Activated CD4-positive, alpha-beta T cell treated with anti-CD3 and anti-CD28 coated beads, Interleukin-2, amount 10 ng/mL, durations not matched to agents 24 days and 14 days (primary cell): ENCODE measurements at regions of chr3 and their contacts with region 1.

Region 1: GRCh38 chr3:52455283-52456168 is at the start of gene NISCH:
- DNase-seq: peak; percentile 100
- H3K4me3 Mint-ChIP-seq: peak within 1 kb of the TSS; percentile 99
- H3K27ac Mint-ChIP-seq: peak within 1 kb of the TSS; percentile 89
- H3K4me1 Mint-ChIP-seq: peaks cover 28% of the 10 kb centered on the region
- H3K27me3 Mint-ChIP-seq: no peaks in the 10 kb centered on the region
- total RNA-seq, gene NISCH: 72.6 and 75.5 TPM in 2 replicates

Region 2: DNA sequence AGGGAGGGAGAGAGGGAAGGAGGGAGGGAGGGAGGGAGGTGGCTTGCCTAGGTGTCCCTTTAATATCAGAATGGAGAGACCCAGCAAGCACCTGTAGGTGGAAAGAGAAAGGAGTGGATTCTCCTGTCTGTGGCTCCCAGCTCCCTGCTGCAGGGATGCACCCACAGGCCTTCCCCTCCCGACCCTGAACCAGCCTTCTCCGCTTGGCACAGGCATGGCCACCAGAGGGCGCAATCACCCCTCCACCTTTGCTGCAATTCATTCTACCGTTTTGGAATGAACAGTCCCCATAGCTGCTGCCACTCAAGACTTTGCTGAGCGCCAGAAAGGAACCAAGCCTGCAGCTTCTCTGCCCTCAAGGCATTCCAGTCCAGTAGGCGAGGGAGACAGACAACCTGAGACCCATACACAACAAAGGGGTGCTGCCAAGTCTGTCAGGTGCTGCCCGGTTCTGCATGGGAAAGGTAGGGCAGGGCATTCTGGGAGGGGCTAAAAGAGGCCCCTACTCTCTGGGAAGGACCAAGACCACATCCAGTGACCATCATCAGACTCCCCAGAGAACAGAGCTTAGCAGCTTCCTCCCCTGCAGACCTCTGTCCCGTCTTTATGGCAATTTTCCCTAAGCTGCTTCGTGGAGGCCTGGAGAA is 235.0 kb before region 1 on chr3:
- intact Hi-C with region 1: loop called (anchors 10 kb)
- DNase-seq: peak; percentile 96
- H3K4me3 Mint-ChIP-seq: peak overlapping the region; percentile 37
- H3K27ac Mint-ChIP-seq: no peak overlapping the region
- H3K4me1 Mint-ChIP-seq: peaks cover 66% of the 10 kb centered on the region
- H3K27me3 Mint-ChIP-seq: no peaks in the 10 kb centered on the region

Region 3: GRCh38 chr3:52481819-52482521 is 26.4 kb after region 1 on chr3:
- intact Hi-C with region 1: no loop called
- DNase-seq: peak; percentile 67
- H3K4me3 Mint-ChIP-seq: no peak overlapping the region
- H3K27ac Mint-ChIP-seq: no peak overlapping the region
- H3K4me1 Mint-ChIP-seq: no peaks in the 10 kb centered on the region
- H3K27me3 Mint-ChIP-seq: no peaks in the 10 kb centered on the region

Region 4: DNA sequence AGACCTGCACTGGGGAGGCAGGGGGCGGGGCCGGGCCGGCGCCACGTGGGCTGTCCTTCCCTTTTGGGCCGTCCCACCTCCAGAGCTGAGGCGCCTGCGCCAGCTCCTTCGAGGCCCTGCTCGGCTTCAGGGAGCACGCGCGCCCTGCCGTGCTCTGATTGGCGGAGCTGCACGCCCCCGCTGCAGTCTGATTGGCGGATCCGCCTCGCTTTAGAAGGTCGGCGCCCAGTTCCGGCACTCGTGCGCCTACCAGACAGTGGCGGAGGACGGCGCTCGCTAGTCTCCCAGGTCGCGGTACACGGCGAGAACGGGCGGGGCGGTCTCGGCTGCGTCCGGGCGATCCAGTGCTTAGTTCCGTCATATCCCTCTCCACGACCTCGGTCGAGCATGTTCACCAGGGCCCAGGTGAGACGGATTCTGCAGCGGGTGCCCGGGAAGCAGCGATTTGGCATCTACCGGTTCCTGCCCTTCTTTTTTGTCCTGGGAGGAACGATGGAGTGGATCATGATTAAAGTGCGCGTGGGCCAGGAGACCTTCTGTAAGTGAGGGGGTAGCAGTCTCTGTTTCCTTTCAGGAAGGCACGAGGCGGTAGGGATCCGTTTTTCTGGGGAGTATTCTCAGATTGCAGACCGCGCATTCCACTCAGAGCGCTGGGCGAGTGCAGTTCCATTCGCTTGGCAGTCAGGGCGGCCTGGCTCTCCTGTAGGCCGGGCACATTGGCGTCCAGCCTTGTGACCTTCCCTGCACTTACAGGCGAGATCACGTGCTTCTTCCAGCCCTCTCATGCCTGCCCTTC is 81.0 kb after region 1 on chr3 and contains the start of gene UQCC5:
- intact Hi-C with region 1: loop called (anchors 2 kb)
- DNase-seq: peak; percentile 99
- H3K4me3 Mint-ChIP-seq: peak within 1 kb of the TSS; percentile 98
- H3K27ac Mint-ChIP-seq: peak within 1 kb of the TSS; percentile 100
- H3K4me1 Mint-ChIP-seq: peaks cover 33% of the 10 kb centered on the region
- H3K27me3 Mint-ChIP-seq: no peaks in the 10 kb centered on the region
- total RNA-seq, gene UQCC5: 13.8 TPM in 2 replicates